Activated naive CD4-positive, alpha-beta T cell treated with anti-CD3 and anti-CD28 coated beads for 36 hours (primary cell): ENCODE measurements at regions of chr3 and their contacts with region 1.

Region 1: GRCh38 chr3:125585595-125586223 is 9.6 kb downstream of the OSBPL11 start:
- DNase-seq: peak; percentile 70
- H3K4me3 Mint-ChIP-seq: no peak overlapping the region
- H3K27ac Mint-ChIP-seq: no peak overlapping the region
- H3K4me1 Mint-ChIP-seq: peaks cover 20% of the 10 kb centered on the region
- H3K27me3 Mint-ChIP-seq: no peaks in the 10 kb centered on the region

Region 2: GRCh38 chr3:124676236-124676635 is 909.5 kb before region 1 on chr3:
- CTCF ChIA-PET with region 1: no interaction called
- intact Hi-C with region 1: no loop called
- DNase-seq: no peak
- H3K4me3 Mint-ChIP-seq: no peak overlapping the region
- H3K27ac Mint-ChIP-seq: no peak overlapping the region
- H3K4me1 Mint-ChIP-seq: peaks cover 4% of the 10 kb centered on the region
- H3K27me3 Mint-ChIP-seq: no peaks in the 10 kb centered on the region

Region 3: GRCh38 chr3:124928333-124929202 is 657.1 kb before region 1 on chr3:
- CTCF ChIA-PET with region 1: interaction called, 3 read pairs
- intact Hi-C with region 1: loop called (anchors 1 kb)
- DNase-seq: peak; percentile 82
- H3K4me3 Mint-ChIP-seq: no peak overlapping the region
- H3K27ac Mint-ChIP-seq: no peak overlapping the region
- H3K4me1 Mint-ChIP-seq: no peaks in the 10 kb centered on the region
- H3K27me3 Mint-ChIP-seq: peaks cover 3% of the 10 kb centered on the region

Region 4: GRCh38 chr3:125150525-125151441 is 434.9 kb before region 1 on chr3:
- CTCF ChIA-PET with region 1: interaction called, 3 read pairs
- intact Hi-C with region 1: loop called (anchors 2 kb)
- DNase-seq: peak; percentile 80
- H3K4me3 Mint-ChIP-seq: no peak overlapping the region
- H3K27ac Mint-ChIP-seq: no peak overlapping the region
- H3K4me1 Mint-ChIP-seq: peaks cover 13% of the 10 kb centered on the region
- H3K27me3 Mint-ChIP-seq: peaks cover 3% of the 10 kb centered on the region

Region 5: GRCh38 chr3:125257536-125257935 is 328.2 kb before region 1 on chr3:
- CTCF ChIA-PET with region 1: no interaction called
- intact Hi-C with region 1: no loop called
- DNase-seq: no peak
- H3K4me3 Mint-ChIP-seq: no peak overlapping the region
- H3K27ac Mint-ChIP-seq: no peak overlapping the region
- H3K4me1 Mint-ChIP-seq: peaks cover 4% of the 10 kb centered on the region
- H3K27me3 Mint-ChIP-seq: no peaks in the 10 kb centered on the region

Region 6: GRCh38 chr3:125437631-125438435 is 147.9 kb before region 1 on chr3:
- CTCF ChIA-PET with region 1: interaction called, 7 read pairs
- intact Hi-C with region 1: loop called (anchors 1 kb)
- DNase-seq: peak; percentile 70
- H3K4me3 Mint-ChIP-seq: no peak overlapping the region
- H3K27ac Mint-ChIP-seq: no peak overlapping the region
- H3K4me1 Mint-ChIP-seq: no peaks in the 10 kb centered on the region
- H3K27me3 Mint-ChIP-seq: no peaks in the 10 kb centered on the region

Region 7: DNA sequence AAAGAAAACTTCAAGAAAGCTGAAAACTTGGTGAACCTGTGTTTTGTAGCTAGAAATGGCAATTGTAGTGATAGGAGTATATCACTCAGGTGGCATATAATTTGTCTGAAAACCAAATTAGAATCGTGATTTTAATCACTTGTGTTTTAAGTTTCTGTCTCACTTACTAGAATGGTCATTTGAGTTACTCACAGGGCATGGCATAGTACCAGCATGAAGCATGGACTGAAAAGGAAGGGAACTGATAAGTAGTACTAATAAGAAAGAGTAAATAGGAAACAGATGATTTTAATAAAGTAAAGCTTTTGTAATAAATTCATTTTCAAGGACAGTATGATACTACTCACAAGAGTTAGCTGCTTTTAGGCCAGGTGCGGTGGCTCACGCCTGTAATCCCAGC is 12.5 kb before region 1 on chr3:
- CTCF ChIA-PET with region 1: interaction called, 12 read pairs
- intact Hi-C with region 1: no loop called
- DNase-seq: no peak
- H3K4me3 Mint-ChIP-seq: no peak overlapping the region
- H3K27ac Mint-ChIP-seq: no peak overlapping the region
- H3K4me1 Mint-ChIP-seq: peaks cover 2% of the 10 kb centered on the region
- H3K27me3 Mint-ChIP-seq: no peaks in the 10 kb centered on the region

Region 8: GRCh38 chr3:125608419-125608818 is 22.7 kb after region 1 on chr3:
- CTCF ChIA-PET with region 1: no interaction called
- intact Hi-C with region 1: no loop called
- DNase-seq: no peak
- H3K4me3 Mint-ChIP-seq: no peak overlapping the region
- H3K27ac Mint-ChIP-seq: no peak overlapping the region
- H3K4me1 Mint-ChIP-seq: no peaks in the 10 kb centered on the region
- H3K27me3 Mint-ChIP-seq: no peaks in the 10 kb centered on the region